B cell (primary cell): ENCODE measurements at regions of chr14 and their contacts with region 1.

Region 1: GRCh38 chr14:93984987-93985410 is 8.6 kb upstream of the ASB2 start:
- DNase-seq: no peak
- ATAC-seq: no peak
- H3K4me3 ChIP-seq: no peak overlapping the region
- H3K4me3 Mint-ChIP-seq: no peak overlapping the region
- H3K27ac ChIP-seq: no peak overlapping the region
- H3K27ac Mint-ChIP-seq: no peak overlapping the region
- H3K4me1 ChIP-seq: no peaks in the 10 kb centered on the region
- H3K4me1 Mint-ChIP-seq: peaks cover 3% of the 10 kb centered on the region
- H3K27me3 ChIP-seq: peaks cover 0 to 71% (median 32%) of the 10 kb centered on the region in 4 experiments
- H3K27me3 Mint-ChIP-seq: peaks cover 37% of the 10 kb centered on the region
- CTCF ChIP-seq: no peak

Region 2: DNA sequence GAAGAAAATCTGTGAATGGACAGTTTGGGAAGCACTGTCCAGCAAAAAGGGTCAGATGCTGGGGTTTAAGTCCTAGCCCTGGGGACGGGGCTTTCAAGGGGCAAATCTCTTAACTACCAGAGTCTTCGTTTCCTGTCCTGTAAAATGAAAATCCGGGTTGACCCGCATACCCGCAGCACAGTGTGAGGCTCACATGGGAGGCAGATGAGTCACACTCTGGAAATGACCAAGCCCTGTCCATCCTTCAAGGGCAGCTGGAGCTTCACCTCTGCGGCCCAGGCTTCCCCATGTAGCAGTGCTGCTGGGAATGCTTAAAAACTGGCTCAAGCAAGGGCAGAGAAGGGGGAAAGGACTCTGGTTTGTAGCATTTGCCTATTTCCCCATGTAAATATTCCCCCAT is 38.9 kb before region 1 on chr14:
- CTCF ChIA-PET with region 1: interaction called, 1,036 read pairs
- POLR2A ChIA-PET with region 1: no interaction called
- intact Hi-C with region 1: loop called (anchors 5 kb)
- DNase-seq: no peak
- ATAC-seq: no peak
- H3K4me3 ChIP-seq: no peak overlapping the region
- H3K4me3 Mint-ChIP-seq: no peak overlapping the region
- H3K27ac ChIP-seq: no peak overlapping the region
- H3K27ac Mint-ChIP-seq: no peak overlapping the region
- H3K4me1 ChIP-seq: no peaks in the 10 kb centered on the region
- H3K4me1 Mint-ChIP-seq: no peaks in the 10 kb centered on the region
- H3K27me3 ChIP-seq: no peaks in the 10 kb centered on the region
- H3K27me3 Mint-ChIP-seq: peaks cover 3% of the 10 kb centered on the region
- CTCF ChIP-seq: no peak

Region 3: GRCh38 chr14:93970549-93970946 is 14.5 kb before region 1 on chr14:
- CTCF ChIA-PET with region 1: interaction called, 10 read pairs
- POLR2A ChIA-PET with region 1: no interaction called
- intact Hi-C with region 1: no loop called
- DNase-seq: peak; percentile 77
- ATAC-seq: peak; percentile 58
- H3K4me3 ChIP-seq: peak overlapping the region; percentile 30 to 78 (median 70)
- H3K4me3 Mint-ChIP-seq: peak overlapping the region; percentile 93
- H3K27ac ChIP-seq: peak overlapping the region; percentile 31 to 44
- H3K27ac Mint-ChIP-seq: peak overlapping the region; percentile 86
- H3K4me1 ChIP-seq: peaks cover 60 to 62% of the 10 kb centered on the region in 2 donors
- H3K4me1 Mint-ChIP-seq: peaks cover 64% of the 10 kb centered on the region
- H3K27me3 ChIP-seq: peaks cover 0 to 19% (median 9%) of the 10 kb centered on the region in 4 experiments
- H3K27me3 Mint-ChIP-seq: peaks cover 15% of the 10 kb centered on the region
- CTCF ChIP-seq: peak; percentile 78

Region 4: GRCh38 chr14:94066089-94066676 is 81.2 kb after region 1 on chr14:
- CTCF ChIA-PET with region 1: no interaction called
- POLR2A ChIA-PET with region 1: no interaction called
- intact Hi-C with region 1: no loop called
- DNase-seq: no peak
- ATAC-seq: no peak
- H3K4me3 ChIP-seq: no peak overlapping the region
- H3K4me3 Mint-ChIP-seq: no peak overlapping the region
- H3K27ac ChIP-seq: no peak overlapping the region
- H3K27ac Mint-ChIP-seq: peak overlapping the region; percentile 32
- H3K4me1 ChIP-seq: peaks cover 0 to 3% of the 10 kb centered on the region in 2 donors
- H3K4me1 Mint-ChIP-seq: peaks cover 60% of the 10 kb centered on the region
- H3K27me3 ChIP-seq: no peaks in the 10 kb centered on the region
- H3K27me3 Mint-ChIP-seq: no peaks in the 10 kb centered on the region
- CTCF ChIP-seq: no peak